ENCODE measurements at regions of chr10 and their contacts with region 1.

Region 1: DNA sequence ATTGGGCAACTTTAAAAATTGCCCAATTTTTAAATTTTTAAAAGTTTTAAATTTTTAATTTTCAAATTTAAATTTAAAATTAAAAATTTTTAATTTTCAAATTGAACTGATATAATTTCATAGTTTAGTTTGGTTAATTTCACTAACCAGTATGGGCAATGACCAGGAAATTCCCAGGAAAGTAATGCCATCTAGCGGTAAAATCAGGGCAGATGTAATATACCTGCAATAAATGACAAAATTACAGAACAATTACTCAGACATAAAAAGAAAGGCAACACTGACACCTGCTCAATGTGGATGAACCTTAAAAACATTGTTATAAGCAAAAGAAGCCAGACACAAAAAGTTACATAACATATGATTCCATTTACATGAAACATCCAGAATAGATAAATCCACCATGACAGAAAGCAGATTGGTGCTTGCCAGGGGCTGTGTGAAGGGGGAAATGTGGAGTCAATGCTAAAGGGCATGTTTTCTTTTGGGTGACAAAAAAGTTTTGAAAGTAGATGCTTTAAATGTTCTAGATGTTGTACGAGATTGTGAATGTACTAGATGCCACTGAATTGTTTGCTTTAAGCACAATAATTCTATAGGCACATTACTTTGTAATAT is 28.6 kb upstream of the SLC16A12 start:
- DNase-seq: no peak
- ATAC-seq: peak; percentile 29
- H3K4me3 Mint-ChIP-seq: no peak overlapping the region
- H3K27ac Mint-ChIP-seq: no peak overlapping the region
- H3K4me1 Mint-ChIP-seq: peaks cover 48% of the 10 kb centered on the region
- H3K27me3 Mint-ChIP-seq: no peaks in the 10 kb centered on the region
- CTCF ChIP-seq: peak; percentile 40; the same call in 1 of the 2 replicates

Region 2: DNA sequence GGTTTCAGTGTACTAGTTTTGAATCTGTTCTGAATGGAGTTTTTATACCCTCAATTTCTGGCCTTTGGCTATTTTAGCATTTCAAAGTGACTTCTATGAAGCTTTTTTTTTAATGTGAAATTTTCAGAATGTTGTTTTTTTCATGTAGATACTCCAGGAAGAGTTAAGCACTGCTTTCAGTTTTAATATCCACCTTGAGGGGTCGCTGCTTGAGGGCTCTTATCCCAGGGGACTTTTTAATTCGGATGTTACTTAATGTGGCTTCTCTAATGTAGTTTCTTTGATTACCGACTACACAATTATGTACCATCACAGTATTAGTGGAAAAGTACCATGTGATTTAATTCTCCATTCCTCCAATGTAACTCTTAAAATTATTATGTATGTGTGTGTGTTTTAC is 144.4 kb before region 1 on chr10:
- CTCF ChIA-PET with region 1: interaction called, 16 read pairs
- POLR2A ChIA-PET with region 1: no interaction called
- DNase-seq: no peak
- ATAC-seq: no peak
- H3K4me3 Mint-ChIP-seq: no peak overlapping the region
- H3K27ac Mint-ChIP-seq: no peak overlapping the region
- H3K4me1 Mint-ChIP-seq: peaks cover 18% of the 10 kb centered on the region
- H3K27me3 Mint-ChIP-seq: peaks cover 17% of the 10 kb centered on the region
- CTCF ChIP-seq: peak; percentile 26; the same call in 1 of the 2 replicates

Region 3: DNA sequence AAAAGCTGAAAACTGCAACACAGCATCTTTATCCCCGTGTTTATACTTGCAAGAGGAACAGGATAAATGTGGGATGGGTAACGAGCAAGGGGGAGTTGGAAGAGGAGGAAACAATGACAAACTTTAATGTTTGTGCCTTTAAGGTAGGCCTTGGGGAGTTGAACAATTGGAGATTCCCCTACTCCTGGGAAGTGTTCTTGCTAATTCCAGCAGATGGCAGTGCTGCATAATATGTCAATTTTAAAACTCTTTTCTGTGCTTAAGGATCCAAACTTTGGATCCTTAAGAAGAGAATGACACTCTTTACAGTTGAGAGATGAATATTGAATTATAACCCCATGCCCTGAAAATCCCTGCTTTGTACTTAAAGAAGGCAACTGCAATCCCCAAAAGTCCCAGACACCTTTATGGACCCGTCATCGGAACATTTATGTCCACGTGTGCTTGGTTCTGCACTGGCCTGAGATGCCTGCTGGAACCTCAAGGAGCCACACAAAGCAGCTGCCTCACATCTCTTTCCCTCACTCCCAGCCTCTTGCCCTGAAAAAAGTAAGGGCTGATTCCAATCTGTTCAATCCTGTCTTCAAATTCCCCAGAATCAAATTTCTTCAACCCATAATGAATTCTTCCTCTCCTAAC is 137.6 kb before region 1 on chr10:
- CTCF ChIA-PET with region 1: interaction called, 28 read pairs
- POLR2A ChIA-PET with region 1: no interaction called
- DNase-seq: no peak
- ATAC-seq: peak; percentile 91
- H3K4me3 Mint-ChIP-seq: no peak overlapping the region
- H3K27ac Mint-ChIP-seq: no peak overlapping the region
- H3K4me1 Mint-ChIP-seq: peaks cover 48% of the 10 kb centered on the region
- H3K27me3 Mint-ChIP-seq: no peaks in the 10 kb centered on the region
- CTCF ChIP-seq: peak; percentile 54; the same call in 1 of the 2 replicates

Region 4: GRCh38 chr10:89466599-89467035 is 97.4 kb before region 1 on chr10:
- CTCF ChIA-PET with region 1: interaction called, 22 read pairs
- POLR2A ChIA-PET with region 1: no interaction called
- DNase-seq: no peak
- ATAC-seq: peak; percentile 91
- H3K4me3 Mint-ChIP-seq: no peak overlapping the region
- H3K27ac Mint-ChIP-seq: no peak overlapping the region
- H3K4me1 Mint-ChIP-seq: peaks cover 27% of the 10 kb centered on the region
- H3K27me3 Mint-ChIP-seq: no peaks in the 10 kb centered on the region
- CTCF ChIP-seq: no peak

Region 5: DNA sequence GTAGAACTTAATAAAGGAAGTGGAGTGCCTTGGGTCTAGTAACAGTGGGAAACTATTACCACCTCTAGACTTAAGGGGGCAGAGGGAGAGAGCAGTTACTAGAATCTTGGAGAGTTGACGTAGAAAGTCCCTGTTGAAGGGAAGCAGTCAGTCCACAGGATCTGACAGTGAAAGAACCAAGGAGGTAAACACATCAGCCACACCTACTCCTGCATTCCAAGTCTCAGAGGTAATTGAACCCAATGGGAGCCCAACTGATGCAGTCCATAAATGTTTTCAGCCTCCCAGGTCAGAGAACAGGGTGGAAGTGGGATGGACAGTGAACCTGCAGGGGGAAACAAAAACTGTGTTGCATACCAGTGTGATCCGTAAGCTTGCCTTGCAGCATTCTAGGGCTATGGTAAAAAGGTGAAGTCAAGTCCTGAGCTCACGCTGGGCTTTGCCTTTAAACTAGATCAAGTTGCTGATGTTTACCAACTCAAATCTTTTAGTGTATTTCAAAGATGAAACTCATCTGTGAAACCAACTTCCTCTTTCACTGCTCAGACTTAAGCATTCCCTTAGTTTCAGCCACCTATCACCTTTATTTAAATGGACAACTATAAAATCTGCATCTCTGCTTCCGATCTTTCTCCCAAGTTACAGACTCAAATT is 85.8 kb before region 1 on chr10:
- CTCF ChIA-PET with region 1: interaction called, 12 read pairs
- POLR2A ChIA-PET with region 1: no interaction called
- DNase-seq: peak; percentile 21
- ATAC-seq: peak; percentile 83
- H3K4me3 Mint-ChIP-seq: no peak overlapping the region
- H3K27ac Mint-ChIP-seq: peak overlapping the region; percentile 76
- H3K4me1 Mint-ChIP-seq: peaks cover 37% of the 10 kb centered on the region
- H3K27me3 Mint-ChIP-seq: no peaks in the 10 kb centered on the region; the same call in 1 of the 2 replicates
- CTCF ChIP-seq: no peak

Region 6: DNA sequence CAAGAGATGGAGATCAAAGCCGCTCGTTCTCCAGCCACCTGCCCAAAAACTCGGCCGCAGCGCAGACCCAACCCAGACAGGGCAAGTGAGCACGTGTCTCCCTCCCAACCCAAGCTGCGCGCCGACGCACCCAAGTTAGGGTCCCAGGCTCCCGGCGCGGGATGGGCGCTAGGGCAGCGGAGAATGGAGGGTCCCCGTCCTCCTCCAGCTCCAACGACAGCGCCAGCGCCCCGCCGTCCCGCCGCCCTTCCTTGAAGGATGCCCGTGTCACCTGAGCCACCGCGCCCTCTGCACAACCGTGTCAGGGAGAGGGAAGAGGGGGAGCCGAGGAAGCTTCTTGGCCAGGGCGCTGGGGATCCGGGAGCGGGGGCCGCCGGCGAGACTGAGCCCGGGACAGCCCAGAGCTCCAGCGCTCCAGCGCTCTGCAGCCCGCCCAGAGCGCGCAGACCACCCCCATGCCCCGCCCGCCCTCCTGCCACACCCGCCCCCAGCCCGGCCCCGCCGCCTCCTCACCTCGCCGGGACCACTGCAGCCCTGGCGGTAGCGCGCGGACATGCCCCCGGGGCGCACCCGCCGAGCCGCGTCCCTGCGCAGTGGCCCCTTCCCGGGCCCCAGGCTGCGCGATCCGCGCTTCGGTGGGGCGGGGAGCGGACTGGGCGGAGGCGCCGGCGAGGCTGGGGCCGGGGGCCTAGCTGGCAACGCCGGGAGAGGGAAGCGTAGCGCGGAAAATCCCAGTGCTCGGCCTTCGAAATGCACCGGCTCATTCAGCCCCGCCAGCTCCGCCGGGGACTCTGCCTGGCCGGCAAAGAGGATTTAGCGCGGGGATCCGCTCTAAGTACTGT is 28.6 kb before region 1 on chr10 and contains the start of gene SLC16A12:
- CTCF ChIA-PET with region 1: interaction called, 13 read pairs
- POLR2A ChIA-PET with region 1: interaction called, 3 read pairs
- DNase-seq: peak; percentile 78
- ATAC-seq: peak; percentile 75
- H3K4me3 Mint-ChIP-seq: peak within 1 kb of the TSS; percentile 71
- H3K27ac Mint-ChIP-seq: peak within 1 kb of the TSS; percentile 99
- H3K4me1 Mint-ChIP-seq: peaks cover 52% of the 10 kb centered on the region
- H3K27me3 Mint-ChIP-seq: peaks cover 21% of the 10 kb centered on the region
- CTCF ChIP-seq: no peak
- total RNA-seq, gene SLC16A12: 8.0 to 10.9 TPM (median 8.3 TPM) in 3 replicates

Region 7: DNA sequence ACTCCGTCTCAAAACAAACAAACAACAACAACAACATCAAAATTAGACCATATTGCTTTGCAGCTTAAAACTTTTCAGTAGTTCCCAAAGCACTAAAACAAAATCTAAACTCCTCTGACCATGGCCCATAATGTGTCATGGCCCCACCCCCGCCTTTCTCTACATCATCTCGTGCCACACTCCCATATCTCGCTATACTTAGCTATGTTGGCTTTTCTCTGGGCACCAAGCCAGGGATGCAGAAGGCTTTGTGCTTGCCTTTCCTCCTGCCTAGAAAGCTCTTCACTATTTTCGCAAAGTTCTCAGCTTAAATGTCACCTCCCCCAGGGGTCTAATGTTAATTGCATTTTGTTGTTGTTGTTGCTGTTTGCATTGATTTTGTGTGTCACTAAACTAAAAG is 13.5 kb before region 1 on chr10:
- CTCF ChIA-PET with region 1: no interaction called
- POLR2A ChIA-PET with region 1: no interaction called
- DNase-seq: no peak
- ATAC-seq: no peak
- H3K4me3 Mint-ChIP-seq: no peak overlapping the region
- H3K27ac Mint-ChIP-seq: no peak overlapping the region
- H3K4me1 Mint-ChIP-seq: no peaks in the 10 kb centered on the region; the same call in 1 of the 2 replicates
- H3K27me3 Mint-ChIP-seq: no peaks in the 10 kb centered on the region
- CTCF ChIP-seq: no peak

Measured in WTC11 (cell line).